IMR-90 (cell line): ENCODE measurements at regions of chr19 and their contacts with region 1.

Region 1: GRCh38 chr19:5577785-5578493 is 10.2 kb upstream of the TINCR start:
- DNase-seq: peak; percentile 38
- ATAC-seq: peak; percentile 97
- H3K4me3 ChIP-seq: no peak overlapping the region
- H3K27ac ChIP-seq: no peak overlapping the region
- H3K4me1 ChIP-seq: no peaks in the 10 kb centered on the region
- H3K27me3 ChIP-seq: no peaks in the 10 kb centered on the region
- CTCF ChIP-seq: peak; percentile 94
- POLR2A ChIP-seq: no peak; the same call in 1 of the 2 replicates
- RAD21 ChIP-seq: peak; percentile 92

Region 2: DNA sequence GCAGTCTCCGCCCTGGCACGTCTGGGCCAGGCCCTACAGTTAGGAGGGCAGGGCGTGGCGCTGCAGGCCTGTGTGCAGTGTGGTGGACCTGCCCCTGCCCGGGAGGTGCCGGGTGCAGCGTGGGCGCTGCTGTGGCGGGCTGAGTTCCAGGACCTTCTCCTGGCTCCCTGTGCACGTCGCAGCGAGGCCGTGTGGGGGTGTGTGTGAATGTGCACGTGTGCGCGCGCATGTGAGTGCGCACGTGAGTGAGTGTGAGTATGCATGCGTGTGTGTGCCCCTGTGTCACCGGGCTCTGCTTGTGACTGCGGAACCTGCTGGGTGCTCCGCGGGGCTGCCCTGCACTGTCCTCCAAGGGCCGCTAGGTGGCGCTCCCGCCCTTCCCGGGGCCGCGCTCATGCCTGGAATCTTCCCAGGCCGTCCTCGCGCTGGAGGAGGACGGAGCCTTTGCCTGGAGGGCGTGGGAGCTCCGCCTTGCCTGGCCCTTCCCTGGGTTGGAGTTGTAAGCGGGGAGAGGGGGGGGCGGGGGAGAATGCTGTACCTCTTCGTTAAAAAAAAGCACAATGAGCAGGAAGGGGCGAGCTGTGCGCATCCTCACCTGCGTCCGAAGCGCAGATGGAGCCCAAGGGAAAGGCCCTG is 529.7 kb before region 1 on chr19:
- CTCF ChIA-PET with region 1: no interaction called
- POLR2A ChIA-PET with region 1: no interaction called
- dilution Hi-C with region 1: no loop called
- in situ Hi-C with region 1: loop called (anchors 5 kb)
- intact Hi-C with region 1: loop called (anchors 1 kb)
- DNase-seq: peak; percentile 67
- ATAC-seq: peak; percentile 96
- H3K4me3 ChIP-seq: no peak overlapping the region
- H3K27ac ChIP-seq: no peak overlapping the region
- H3K4me1 ChIP-seq: peaks cover 21% of the 10 kb centered on the region
- H3K27me3 ChIP-seq: no peaks in the 10 kb centered on the region
- CTCF ChIP-seq: peak; percentile 97
- POLR2A ChIP-seq: no peak
- RAD21 ChIP-seq: peak; percentile 91

Region 3: DNA sequence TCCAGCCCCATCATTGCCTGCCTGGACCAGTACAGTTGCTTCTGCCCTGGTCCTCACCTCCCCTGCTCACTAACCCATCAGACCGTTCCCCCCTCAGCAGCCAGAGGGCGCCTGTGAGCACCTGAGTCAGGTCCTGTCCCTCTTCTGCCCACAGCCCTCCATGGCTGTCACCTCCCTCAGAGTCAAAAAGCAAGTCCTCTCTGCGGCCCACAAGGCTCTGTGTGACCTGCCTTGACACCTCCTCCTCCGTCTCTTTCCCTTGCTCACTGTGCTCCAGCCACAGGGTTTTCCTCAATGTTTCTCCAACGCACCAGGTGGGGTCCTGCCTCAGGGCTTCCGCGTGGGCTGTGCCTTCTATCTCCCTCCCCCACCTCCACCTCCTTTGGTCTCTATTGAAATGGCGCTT is 208.0 kb before region 1 on chr19:
- CTCF ChIA-PET with region 1: no interaction called
- POLR2A ChIA-PET with region 1: no interaction called
- dilution Hi-C with region 1: no loop called
- in situ Hi-C with region 1: no loop called
- intact Hi-C with region 1: loop called (anchors 10 kb)
- DNase-seq: no peak
- ATAC-seq: peak; percentile 70; the same call in 1 of the 2 replicates
- H3K4me3 ChIP-seq: no peak overlapping the region
- H3K27ac ChIP-seq: no peak overlapping the region
- H3K4me1 ChIP-seq: no peaks in the 10 kb centered on the region
- H3K27me3 ChIP-seq: peaks cover 9% of the 10 kb centered on the region
- CTCF ChIP-seq: peak; percentile 52
- POLR2A ChIP-seq: no peak
- RAD21 ChIP-seq: peak; percentile 57

Region 4: DNA sequence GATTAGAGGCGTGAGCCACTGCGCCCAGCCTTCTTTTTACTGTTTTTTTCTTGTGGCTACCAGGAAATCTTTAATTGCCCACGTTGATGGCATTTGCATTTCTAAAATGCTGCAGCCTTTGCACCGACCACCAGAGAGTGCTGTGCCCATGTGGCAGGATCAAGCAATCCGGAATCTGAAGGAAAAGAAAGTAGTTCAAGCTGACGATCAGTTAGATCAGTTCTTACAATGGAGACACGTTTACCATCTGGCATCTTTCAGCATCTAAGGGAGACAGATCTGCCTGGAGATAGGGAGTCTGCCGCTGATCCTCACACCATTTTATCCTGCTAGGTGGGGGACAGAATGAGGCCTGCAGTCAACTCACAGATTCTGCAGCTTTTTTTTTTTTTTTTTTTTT is 30.1 kb before region 1 on chr19:
- CTCF ChIA-PET with region 1: no interaction called
- POLR2A ChIA-PET with region 1: no interaction called
- dilution Hi-C with region 1: no loop called
- in situ Hi-C with region 1: no loop called
- intact Hi-C with region 1: loop called (anchors 1 kb)
- DNase-seq: peak; percentile 51
- ATAC-seq: peak; percentile 79
- H3K4me3 ChIP-seq: no peak overlapping the region
- H3K27ac ChIP-seq: no peak overlapping the region
- H3K4me1 ChIP-seq: no peaks in the 10 kb centered on the region
- H3K27me3 ChIP-seq: peaks cover 14% of the 10 kb centered on the region
- CTCF ChIP-seq: peak; percentile 68
- POLR2A ChIP-seq: no peak
- RAD21 ChIP-seq: peak; percentile 67